Left lung (tissue), 14 donors: ENCODE measurements at regions of chr14 and their contacts with region 1.

Region 1: GRCh38 chr14:22319526-22320361 is 269.3 kb downstream of the DAD1 start:
- DNase-seq: peak in 2 of 4 donors; percentile 40 to 68
- ATAC-seq: peak; percentile 96
- H3K4me3 ChIP-seq: no peak overlapping the region
- H3K27ac ChIP-seq: no peak overlapping the region
- H3K4me1 ChIP-seq: no peaks in the 10 kb centered on the region
- H3K27me3 ChIP-seq: peaks cover 0 to 4% of the 10 kb centered on the region in 2 donors
- CTCF ChIP-seq: peak; percentile 26 to 64

Region 2: DNA sequence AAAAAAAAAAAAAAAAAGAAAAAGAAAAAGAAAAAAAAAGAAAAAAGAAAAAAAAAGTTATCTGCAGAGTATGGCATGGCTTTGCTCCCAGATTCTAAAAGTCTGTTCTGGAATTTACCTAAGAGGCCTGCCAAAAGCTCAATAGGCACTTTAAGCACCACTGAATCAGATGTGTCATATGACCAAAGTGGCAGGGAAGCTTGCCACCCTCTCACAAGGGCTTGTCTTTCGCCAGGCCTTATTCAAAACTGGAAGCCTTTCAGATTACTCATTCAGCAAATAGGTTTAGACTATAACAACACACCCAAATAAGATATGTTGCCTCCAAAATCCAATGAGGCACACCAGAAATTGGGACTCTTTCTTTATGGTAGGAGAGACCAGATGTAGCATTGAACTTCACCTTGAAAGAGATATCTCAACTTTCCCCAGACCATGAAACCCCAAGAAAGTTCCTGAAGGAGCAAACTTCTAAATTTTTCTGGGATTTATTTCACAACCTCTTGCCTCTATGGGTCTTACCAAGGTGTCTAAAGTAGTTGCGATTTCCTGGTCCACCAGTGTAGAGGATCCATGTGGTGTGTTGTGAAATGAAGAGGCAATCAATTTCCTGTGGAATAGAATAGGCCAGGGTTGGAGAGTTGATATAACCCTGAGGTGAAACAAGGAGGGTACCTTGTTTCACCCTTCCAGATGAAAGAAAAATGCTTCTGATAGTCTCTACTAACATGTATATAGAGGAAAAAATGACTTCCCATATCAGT is 50.5 kb after region 1 on chr14:
- intact Hi-C with region 1: loop called in 1 of 2 experiments (anchors 5 kb)
- DNase-seq: peak in 2 of 4 donors; percentile 16 to 68
- ATAC-seq: peak; percentile 93
- H3K4me3 ChIP-seq: no peak overlapping the region
- H3K27ac ChIP-seq: peak overlapping the region; percentile 72 to 78
- H3K4me1 ChIP-seq: peaks cover 0 to 8% of the 10 kb centered on the region in 2 donors
- H3K27me3 ChIP-seq: no peaks in the 10 kb centered on the region
- CTCF ChIP-seq: no peak

Region 3: DNA sequence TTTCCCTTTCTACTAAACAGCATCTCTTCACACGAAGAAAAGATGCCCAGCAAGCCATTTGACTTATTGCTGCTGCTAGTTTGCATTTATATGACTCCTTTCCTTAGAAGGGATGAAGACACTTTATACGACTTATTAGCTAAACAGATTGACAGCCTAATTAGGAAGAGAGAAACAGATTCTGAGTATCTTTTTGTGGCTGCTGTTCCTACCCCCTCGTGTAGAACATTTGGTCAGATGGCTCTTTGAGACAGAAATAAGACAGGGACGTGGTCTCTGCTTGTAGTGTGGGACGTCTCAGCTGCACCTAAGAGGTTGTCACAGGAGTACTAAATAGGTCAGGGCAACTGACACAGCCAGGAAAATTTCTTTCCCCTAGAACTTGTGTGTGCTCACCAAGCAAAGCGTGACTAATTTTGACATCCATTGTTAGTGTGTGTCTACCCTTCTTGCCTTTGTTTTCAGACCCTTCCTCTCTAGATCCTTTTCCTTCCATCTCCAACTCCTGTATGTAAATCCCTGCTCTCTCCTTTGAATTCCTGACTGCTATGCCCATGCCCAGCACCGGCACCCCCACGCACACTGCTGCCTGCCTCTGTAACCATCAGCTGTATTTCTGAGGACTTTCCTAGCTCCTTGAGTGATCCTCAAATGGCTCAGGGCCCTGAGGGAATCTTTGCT is 186.1 kb after region 1 on chr14:
- intact Hi-C with region 1: no loop called
- DNase-seq: no peak
- ATAC-seq: no peak
- H3K4me3 ChIP-seq: no peak overlapping the region
- H3K27ac ChIP-seq: no peak overlapping the region
- H3K4me1 ChIP-seq: no peaks in the 10 kb centered on the region
- H3K27me3 ChIP-seq: no peaks in the 10 kb centered on the region
- CTCF ChIP-seq: no peak